ENCODE measurements at regions of chr15 and their contacts with region 1.

Region 1: GRCh38 chr15:58070801-58071418 is 5.4 kb upstream of the ALDH1A2 start:
- DNase-seq: peak; percentile 40
- ATAC-seq: no peak
- H3K4me3 ChIP-seq: no peak overlapping the region
- H3K27ac ChIP-seq: no peak overlapping the region
- H3K4me1 ChIP-seq: peaks cover 5% of the 10 kb centered on the region; the same call in 1 of the 2 replicates
- H3K27me3 ChIP-seq: peaks cover 0 to 12% of the 10 kb centered on the region in 2 experiments; a peak in 2 of 5 replicates
- CTCF ChIP-seq: peak; percentile 76
- EP300 ChIP-seq: no peak
- POLR2A ChIP-seq: no peak
- RAD21 ChIP-seq: no peak

Region 2: DNA sequence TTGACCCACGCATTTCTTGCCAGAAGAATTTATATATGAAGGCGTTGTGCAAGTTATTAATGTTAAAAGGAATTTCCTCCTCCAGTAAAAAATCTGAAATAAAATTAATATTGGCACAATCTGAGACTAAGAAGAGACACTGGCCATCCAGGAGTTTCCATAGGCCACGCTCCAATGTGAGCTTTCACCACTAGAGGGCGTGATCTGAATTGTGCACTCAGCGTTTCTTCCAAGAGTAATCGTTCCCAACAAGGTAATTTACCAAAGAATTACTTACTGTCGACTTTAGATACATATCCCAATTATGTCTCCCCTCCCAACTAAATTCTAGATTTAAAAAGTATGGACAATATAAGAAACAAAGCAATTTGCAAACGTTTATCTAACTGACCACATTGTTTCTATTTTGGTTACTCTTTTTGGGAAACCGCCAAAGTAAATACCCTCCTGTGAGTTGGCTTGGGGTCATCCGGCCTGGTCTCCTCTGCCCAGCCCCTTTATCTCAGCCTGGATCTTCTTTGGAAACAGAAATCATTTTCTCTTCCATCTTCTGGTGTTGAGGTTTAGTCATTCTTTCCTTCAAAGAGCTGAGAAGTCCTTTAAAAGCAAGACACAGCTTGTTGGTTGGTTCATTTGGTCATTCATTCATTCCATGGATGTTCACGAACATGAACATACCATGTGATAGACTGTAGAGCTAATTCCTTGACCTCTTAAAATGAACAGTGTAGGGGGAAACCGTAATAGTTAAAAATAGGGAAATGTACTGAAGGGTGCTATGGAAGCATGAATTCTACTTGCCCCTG is 338.2 kb before region 1 on chr15:
- CTCF ChIA-PET with region 1: no interaction called
- POLR2A ChIA-PET with region 1: no interaction called
- in situ Hi-C with region 1: no loop called
- intact Hi-C with region 1: loop called (anchors 10 kb)
- DNase-seq: peak; percentile 49
- ATAC-seq: peak; percentile 81
- H3K4me3 ChIP-seq: no peak overlapping the region
- H3K27ac ChIP-seq: no peak overlapping the region
- H3K4me1 ChIP-seq: peaks cover 5% of the 10 kb centered on the region
- H3K27me3 ChIP-seq: no peaks in the 10 kb centered on the region; a peak in 1 of 5 replicates
- CTCF ChIP-seq: peak; percentile 71
- EP300 ChIP-seq: no peak
- POLR2A ChIP-seq: no peak
- RAD21 ChIP-seq: no peak

Region 3: GRCh38 chr15:57743424-57743823 is 327.5 kb before region 1 on chr15:
- CTCF ChIA-PET with region 1: no interaction called
- POLR2A ChIA-PET with region 1: no interaction called
- in situ Hi-C with region 1: loop called (anchors 10 kb)
- intact Hi-C with region 1: loop called (anchors 10 kb)
- DNase-seq: peak; percentile 4
- ATAC-seq: peak; percentile 51
- H3K4me3 ChIP-seq: no peak overlapping the region
- H3K27ac ChIP-seq: no peak overlapping the region
- H3K4me1 ChIP-seq: 0 out of 2 replicates have a peak, but pooled peaks cover 8% of the 10 kb centered on the region
- H3K27me3 ChIP-seq: peaks cover 0 to 11% of the 10 kb centered on the region in 2 experiments; a peak in 1 of 5 replicates
- CTCF ChIP-seq: peak; percentile 47
- EP300 ChIP-seq: no peak
- POLR2A ChIP-seq: no peak
- RAD21 ChIP-seq: no peak

Region 4: GRCh38 chr15:57866149-57866736 is 204.7 kb before region 1 on chr15:
- CTCF ChIA-PET with region 1: interaction called, 4 read pairs
- POLR2A ChIA-PET with region 1: no interaction called
- in situ Hi-C with region 1: loop called (anchors 5 kb)
- intact Hi-C with region 1: no loop called
- DNase-seq: peak; percentile 56
- ATAC-seq: peak; percentile 67
- H3K4me3 ChIP-seq: no peak overlapping the region
- H3K27ac ChIP-seq: no peak overlapping the region
- H3K4me1 ChIP-seq: no peaks in the 10 kb centered on the region
- H3K27me3 ChIP-seq: peaks cover 0 to 1% of the 10 kb centered on the region in 2 experiments; a peak in 1 of 5 replicates
- CTCF ChIP-seq: peak; percentile 68
- EP300 ChIP-seq: no peak
- POLR2A ChIP-seq: no peak
- RAD21 ChIP-seq: no peak

Region 5: DNA sequence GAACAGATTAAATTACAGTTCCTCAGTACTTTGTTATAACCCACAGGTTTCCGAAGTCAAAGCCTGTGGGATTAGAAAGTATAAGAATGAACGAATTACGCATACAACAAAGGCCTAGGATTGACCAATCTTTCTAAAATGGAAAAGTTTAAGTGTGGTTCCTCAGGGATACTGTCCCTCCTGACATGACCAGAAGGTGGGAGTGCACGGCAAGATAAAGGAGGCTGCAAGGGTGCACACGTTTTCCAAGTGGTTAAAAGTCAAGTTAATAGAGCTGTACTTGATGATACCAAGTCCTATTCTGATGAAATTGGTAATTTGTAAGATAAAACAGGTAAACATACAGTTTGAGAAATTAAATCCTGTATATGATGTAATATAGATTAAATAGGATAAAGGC is 101.6 kb before region 1 on chr15:
- CTCF ChIA-PET with region 1: no interaction called
- POLR2A ChIA-PET with region 1: no interaction called
- in situ Hi-C with region 1: no loop called
- intact Hi-C with region 1: loop called (anchors 1 kb)
- DNase-seq: no peak
- ATAC-seq: no peak; the same call in 2 of the 3 replicates
- H3K4me3 ChIP-seq: no peak overlapping the region
- H3K27ac ChIP-seq: no peak overlapping the region
- H3K4me1 ChIP-seq: no peaks in the 10 kb centered on the region
- H3K27me3 ChIP-seq: no peaks in the 10 kb centered on the region; a peak in 1 of 5 replicates
- CTCF ChIP-seq: peak; percentile 43
- EP300 ChIP-seq: no peak
- POLR2A ChIP-seq: no peak
- RAD21 ChIP-seq: no peak

Measured in HepG2 (cell line).